PC-9 (cell line): ENCODE measurements at regions of chr21 and their contacts with region 1.

Region 1: DNA sequence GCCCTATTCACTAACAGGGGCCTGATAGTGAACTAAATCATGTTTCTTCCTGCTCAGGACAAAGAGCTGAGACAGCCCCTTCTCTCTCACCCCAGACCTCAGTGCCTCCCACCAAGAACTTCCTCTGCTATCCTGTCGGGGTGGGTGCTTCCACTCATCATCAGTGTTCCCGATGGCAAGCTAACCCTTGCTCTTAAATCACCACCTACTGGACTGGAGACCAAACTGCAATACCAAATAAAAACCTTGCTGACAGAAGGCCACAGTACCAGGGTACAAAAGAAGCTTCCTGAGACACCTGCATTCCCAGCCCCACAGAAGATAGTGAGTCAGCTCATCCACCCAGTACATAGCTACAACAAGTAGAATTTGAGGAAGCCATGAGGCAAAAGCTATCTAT is 799.5 kb downstream of the LTN1 start:
- DNase-seq: no peak
- H3K4me3 ChIP-seq: no peak overlapping the region
- H3K27ac ChIP-seq: no peak overlapping the region
- H3K4me1 ChIP-seq: no peaks in the 10 kb centered on the region
- H3K27me3 ChIP-seq: no peaks in the 10 kb centered on the region
- CTCF ChIP-seq: no peak

Region 2: DNA sequence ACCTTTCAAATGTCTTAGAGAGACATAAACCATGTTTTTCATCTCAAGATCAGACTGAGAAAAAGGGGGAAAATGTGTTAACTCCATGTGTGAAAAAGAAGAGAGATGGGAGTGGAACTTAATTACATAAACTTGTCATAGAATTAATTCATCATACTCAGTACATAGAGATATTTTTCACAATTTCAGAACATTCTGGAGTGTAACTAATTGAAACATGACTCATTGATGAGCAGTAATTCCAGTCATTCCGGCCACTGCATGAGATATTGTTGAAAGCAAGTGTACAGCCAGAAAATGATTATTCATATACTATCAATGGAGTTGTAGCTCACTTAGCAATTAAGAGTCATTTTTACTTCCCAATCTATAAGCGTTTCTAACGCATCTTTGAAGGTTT is 60.1 kb after region 1 on chr21:
- CTCF ChIA-PET with region 1: no interaction called
- POLR2A ChIA-PET with region 1: interaction called, 10 read pairs
- intact Hi-C with region 1: no loop called
- DNase-seq: no peak
- H3K4me3 ChIP-seq: no peak overlapping the region
- H3K27ac ChIP-seq: no peak overlapping the region
- H3K4me1 ChIP-seq: no peaks in the 10 kb centered on the region
- H3K27me3 ChIP-seq: no peaks in the 10 kb centered on the region
- CTCF ChIP-seq: no peak